Ascending aorta (tissue), 2 donors: ENCODE measurements at regions of chr6 and their contacts with region 1.

Region 1: GRCh38 chr6:30102970-30103874 is 9.7 kb downstream of the TRIM31 start:
- DNase-seq: peak; percentile 32 to 94
- H3K4me3 ChIP-seq: peak overlapping the region; percentile 53 to 58
- H3K27ac ChIP-seq: peak overlapping the region; percentile 60
- H3K4me1 ChIP-seq: peaks cover 7 to 18% of the 10 kb centered on the region in 2 donors
- H3K27me3 ChIP-seq: peaks cover 12% of the 10 kb centered on the region
- CTCF ChIP-seq: peak; percentile 80 to 92 (median 88)

Region 2: GRCh38 chr6:29723262-29723665 is 380.0 kb before region 1 on chr6 and contains the start of gene HLA-F:
- intact Hi-C with region 1: no loop called
- DNase-seq: peak; percentile 81 to 96
- H3K4me3 ChIP-seq: peak within 1 kb of the TSS; percentile 85 to 94
- H3K27ac ChIP-seq: peak within 1 kb of the TSS; percentile 87 to 93
- H3K4me1 ChIP-seq: peaks cover 12 to 13% of the 10 kb centered on the region in 2 donors
- H3K27me3 ChIP-seq: no peaks in the 10 kb centered on the region
- CTCF ChIP-seq: no peak
- total RNA-seq, gene HLA-F: 75.0 TPM

Region 3: DNA sequence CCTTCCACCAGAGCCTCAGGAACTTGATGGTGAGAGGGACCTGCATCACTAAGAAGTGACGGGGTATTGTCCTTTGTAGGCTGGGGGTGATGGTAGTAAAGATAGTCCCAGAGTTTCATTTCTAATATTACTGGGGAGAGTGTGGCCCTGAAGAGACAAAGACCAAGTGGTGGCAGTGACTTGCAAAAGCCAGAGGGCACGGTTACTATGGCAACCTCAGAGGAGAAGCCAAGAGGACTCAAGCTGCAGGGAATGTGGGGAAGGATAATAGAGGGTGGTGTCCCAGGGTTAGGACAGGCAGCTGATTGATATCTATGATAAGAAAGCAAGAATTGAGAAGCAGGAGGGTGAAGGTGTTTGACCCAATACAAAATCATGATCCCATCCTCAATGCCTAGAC is 233.1 kb before region 1 on chr6:
- intact Hi-C with region 1: no loop called
- DNase-seq: no peak
- H3K4me3 ChIP-seq: no peak overlapping the region
- H3K27ac ChIP-seq: no peak overlapping the region
- H3K4me1 ChIP-seq: no peaks in the 10 kb centered on the region
- H3K27me3 ChIP-seq: no peaks in the 10 kb centered on the region
- CTCF ChIP-seq: no peak

Region 4: GRCh38 chr6:30061092-30061857 is 41.9 kb before region 1 on chr6 and contains the start of gene POLR1H:
- intact Hi-C with region 1: loop called (anchors 2 kb)
- DNase-seq: peak; percentile 70 to 95
- H3K4me3 ChIP-seq: peak within 1 kb of the TSS; percentile 77 to 81
- H3K27ac ChIP-seq: peak within 1 kb of the TSS; percentile 81 to 90
- H3K4me1 ChIP-seq: peaks cover 3 to 16% of the 10 kb centered on the region in 2 donors
- H3K27me3 ChIP-seq: no peaks in the 10 kb centered on the region
- CTCF ChIP-seq: peak in 1 of 3 experiments; percentile 7
- total RNA-seq, gene POLR1H: 36.9 TPM

Region 5: GRCh38 chr6:30130887-30131862 is 28.0 kb after region 1 on chr6:
- intact Hi-C with region 1: loop called (anchors 1 kb)
- DNase-seq: peak in 1 of 2 donors; percentile 80
- H3K4me3 ChIP-seq: no peak overlapping the region
- H3K27ac ChIP-seq: no peak overlapping the region
- H3K4me1 ChIP-seq: peaks cover 0 to 4% of the 10 kb centered on the region in 2 donors
- H3K27me3 ChIP-seq: peaks cover 19% of the 10 kb centered on the region
- CTCF ChIP-seq: peak; percentile 88 to 95 (median 91)

Region 6: DNA sequence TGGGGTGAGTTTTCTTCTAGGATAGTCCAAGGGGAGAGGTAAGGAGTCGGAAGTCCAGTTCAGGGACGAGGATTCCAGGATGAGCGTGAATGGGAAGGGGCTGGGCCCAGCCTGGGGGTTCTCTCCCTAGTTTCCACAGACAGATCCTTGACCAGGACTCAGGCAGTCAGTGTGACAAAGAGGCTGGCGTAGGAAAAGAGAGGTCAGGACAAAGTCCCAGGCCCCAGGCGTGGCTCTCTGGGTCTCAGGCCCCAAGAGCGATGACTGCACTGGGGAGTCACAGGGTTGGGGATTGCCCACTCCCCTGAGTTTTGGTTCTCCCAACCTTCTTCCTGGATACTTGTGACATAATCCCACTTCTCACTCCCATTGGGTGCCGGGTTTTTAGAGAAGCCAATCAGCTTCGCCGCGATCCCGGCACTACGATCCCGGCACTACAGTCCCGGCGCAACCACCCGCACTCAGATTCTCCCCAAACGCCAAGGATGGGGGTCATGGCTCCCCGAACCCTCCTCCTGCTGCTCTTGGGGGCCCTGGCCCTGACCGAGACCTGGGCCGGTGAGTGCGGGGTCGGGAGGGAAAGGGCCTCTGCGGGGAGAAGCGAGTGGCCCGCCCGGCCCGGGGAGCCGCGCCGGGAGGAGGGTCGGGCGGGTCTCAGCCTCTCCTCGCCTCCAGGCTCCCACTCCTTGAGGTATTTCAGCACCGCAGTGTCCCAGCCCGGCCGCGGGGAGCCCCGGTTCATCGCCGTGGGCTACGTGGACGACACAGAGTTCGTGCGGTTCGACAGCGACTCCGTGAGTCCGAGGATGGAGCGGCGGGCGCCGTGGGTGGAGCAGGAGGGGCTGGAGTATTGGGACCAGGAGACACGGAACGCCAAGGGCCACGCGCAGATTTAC is 156.2 kb after region 1 on chr6:
- intact Hi-C with region 1: loop called (anchors 2 kb)
- DNase-seq: peak; percentile 14 to 90
- H3K4me3 ChIP-seq: peak overlapping the region; percentile 82 to 84
- H3K27ac ChIP-seq: peak overlapping the region; percentile 85
- H3K4me1 ChIP-seq: peaks cover 0 to 5% of the 10 kb centered on the region in 2 donors
- H3K27me3 ChIP-seq: no peaks in the 10 kb centered on the region
- CTCF ChIP-seq: peak in 2 of 3 experiments; percentile 41 to 51

Region 7: GRCh38 chr6:30396833-30397479 is 293.7 kb after region 1 on chr6:
- intact Hi-C with region 1: loop called (anchors 2 kb)
- DNase-seq: peak; percentile 18 to 86
- H3K4me3 ChIP-seq: no peak overlapping the region
- H3K27ac ChIP-seq: no peak overlapping the region
- H3K4me1 ChIP-seq: no peaks in the 10 kb centered on the region
- H3K27me3 ChIP-seq: no peaks in the 10 kb centered on the region
- CTCF ChIP-seq: peak; percentile 61 to 73 (median 68)